Cardiac septum (tissue), 1 donor: ENCODE measurements at regions of chr19 and their contacts with region 1.

Region 1: GRCh38 chr19:38618590-38619360 is at the start of gene EIF3K:
- DNase-seq: peak; percentile 99
- total RNA-seq, gene EIF3K: 483 TPM

Region 2: DNA sequence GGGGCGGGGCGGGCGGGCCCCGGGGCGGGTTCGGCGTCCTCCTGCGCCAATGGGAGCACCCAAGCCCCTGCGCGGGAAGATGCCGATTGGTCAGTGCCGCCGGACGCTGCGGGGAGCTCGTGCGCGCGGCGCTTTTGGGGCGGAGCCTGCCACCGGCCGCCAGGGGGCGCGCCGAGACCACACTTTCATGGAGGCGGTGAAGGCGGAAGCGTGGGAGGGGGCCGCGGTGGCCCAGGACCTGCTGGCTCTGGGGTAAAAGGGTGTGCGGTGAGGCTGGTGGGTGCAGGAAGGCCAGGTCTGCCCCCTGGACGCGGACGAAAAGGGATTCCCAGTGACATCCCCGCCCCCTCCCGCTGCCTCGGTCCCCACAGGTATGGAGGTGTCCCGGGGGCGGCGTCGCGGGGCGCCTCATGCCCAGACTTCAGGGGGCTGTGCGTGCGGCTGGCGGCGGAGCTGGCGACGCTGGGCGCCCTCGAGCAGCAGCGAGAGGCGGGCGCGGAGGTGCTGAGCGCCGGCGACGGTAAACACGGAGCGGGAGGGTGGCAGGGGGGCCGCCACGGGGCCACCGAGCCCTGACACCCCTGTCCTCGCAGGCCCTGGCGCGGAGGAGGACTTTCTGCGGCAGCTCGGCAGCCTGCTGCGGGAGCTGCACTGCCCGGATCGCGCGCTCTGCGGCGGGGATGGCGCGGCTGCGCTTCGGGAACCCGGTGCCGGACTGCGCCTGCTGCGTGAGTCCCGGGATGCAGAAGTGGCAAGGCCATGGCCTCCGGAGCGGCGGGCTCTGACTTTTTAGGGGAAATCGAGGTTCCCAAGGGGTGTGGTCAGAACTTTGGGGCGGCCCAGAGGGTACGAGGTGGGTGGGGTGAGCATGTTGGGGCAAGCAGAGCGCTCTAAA is 215.6 kb before region 1 on chr19 and contains the start of gene FAM98C:
- intact Hi-C with region 1: loop called (anchors 5 kb)
- DNase-seq: peak; percentile 99
- total RNA-seq, gene FAM98C: 14.2 TPM

Region 3: GRCh38 chr19:38640368-38640767 is 21.6 kb after region 1 on chr19:
- intact Hi-C with region 1: no loop called
- DNase-seq: no peak

Region 4: DNA sequence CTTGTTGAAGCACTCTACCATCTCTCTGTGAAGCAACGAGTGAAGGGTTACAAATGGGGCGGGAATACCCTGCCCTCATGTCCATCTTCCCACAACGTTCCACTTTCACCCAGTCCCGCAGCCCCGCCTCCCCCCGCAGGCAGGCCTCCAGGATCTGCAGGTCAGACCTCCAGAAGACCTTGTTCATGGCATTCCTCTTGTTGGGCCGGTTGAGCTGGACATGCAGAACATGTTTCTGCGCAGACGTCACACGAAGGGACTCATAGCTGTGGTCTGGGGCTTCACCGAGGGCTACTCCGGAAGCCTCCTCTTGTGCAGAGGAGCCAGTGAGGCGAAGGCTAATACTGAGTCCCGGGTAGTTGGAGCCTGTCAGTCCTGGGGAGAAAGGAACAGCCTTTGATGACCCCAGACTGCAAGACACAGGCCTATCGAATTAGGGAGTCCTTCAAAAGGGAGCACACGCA is 212.4 kb after region 1 on chr19:
- intact Hi-C with region 1: loop called (anchors 5 kb)
- DNase-seq: peak; percentile 79

Region 5: DNA sequence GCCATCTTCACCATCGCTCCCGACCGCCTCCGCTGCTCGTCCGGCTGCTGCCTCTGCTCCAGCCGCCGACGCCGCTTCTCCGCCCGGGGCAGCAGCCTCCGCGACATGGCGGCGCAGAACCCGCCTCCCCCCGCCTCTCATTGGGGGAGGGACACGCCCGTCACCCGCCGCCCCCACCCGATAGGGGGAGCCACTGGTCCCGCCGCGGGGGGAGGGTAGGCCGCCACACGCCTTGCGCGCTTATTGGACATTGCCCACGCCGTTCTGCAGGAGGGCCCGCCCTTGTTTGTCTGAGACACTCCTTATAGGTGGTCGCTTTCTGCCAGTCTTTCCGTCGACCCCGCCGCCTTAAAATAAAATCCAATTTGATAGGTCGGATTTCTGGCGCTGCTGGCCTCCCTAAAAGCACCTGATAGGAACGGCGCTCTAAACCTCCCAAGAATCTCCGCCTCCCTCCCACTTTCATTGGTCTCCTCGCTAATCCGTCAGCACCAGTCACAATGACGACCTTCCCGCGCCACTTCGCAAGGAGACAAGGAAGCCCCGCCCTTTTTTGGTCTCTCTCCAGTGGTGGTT is 231.2 kb after region 1 on chr19 and contains the start of gene HNRNPL:
- intact Hi-C with region 1: loop called (anchors 5 kb)
- DNase-seq: peak; percentile 100
- total RNA-seq, gene HNRNPL: 136 TPM